ENCODE measurements at regions of chr1 and their contacts with region 1.

Region 1: DNA sequence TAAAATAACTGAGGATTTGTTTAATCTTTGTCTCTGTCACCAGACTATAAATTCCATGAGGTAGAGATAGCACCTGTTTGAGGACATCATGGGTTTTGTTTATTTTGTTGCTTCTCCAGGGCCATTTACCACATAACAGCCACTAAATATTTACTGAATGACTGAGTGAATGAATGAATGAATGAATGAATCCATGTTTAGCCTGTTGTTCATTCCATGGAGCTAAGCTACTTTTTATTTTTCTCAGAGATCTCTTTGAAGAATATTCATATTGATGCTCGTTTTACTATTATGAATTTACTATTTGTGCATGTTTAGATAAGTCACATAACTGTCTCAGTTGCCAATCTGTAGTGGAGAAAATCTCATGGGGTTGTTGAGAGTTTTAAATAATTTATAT is 17.7 kb downstream of the LRRC8B start:
- DNase-seq: no peak
- ATAC-seq: no peak
- H3K4me3 ChIP-seq: no peak overlapping the region
- H3K4me3 Mint-ChIP-seq: no peak overlapping the region
- H3K27ac ChIP-seq: no peak overlapping the region
- H3K27ac Mint-ChIP-seq: no peak overlapping the region
- H3K4me1 ChIP-seq: no peaks in the 10 kb centered on the region
- H3K4me1 Mint-ChIP-seq: peaks cover 17% of the 10 kb centered on the region
- H3K27me3 ChIP-seq: no peaks in the 10 kb centered on the region
- H3K27me3 Mint-ChIP-seq: no peaks in the 10 kb centered on the region
- CTCF ChIP-seq: no peak

Region 2: GRCh38 chr1:89221341-89221740 is 321.0 kb before region 1 on chr1:
- CTCF ChIA-PET with region 1: no interaction called
- POLR2A ChIA-PET with region 1: no interaction called
- intact Hi-C with region 1: no loop called
- DNase-seq: no peak
- ATAC-seq: no peak
- H3K4me3 ChIP-seq: no peak overlapping the region
- H3K4me3 Mint-ChIP-seq: no peak overlapping the region
- H3K27ac ChIP-seq: no peak overlapping the region
- H3K27ac Mint-ChIP-seq: no peak overlapping the region
- H3K4me1 ChIP-seq: no peaks in the 10 kb centered on the region
- H3K4me1 Mint-ChIP-seq: no peaks in the 10 kb centered on the region
- H3K27me3 ChIP-seq: no peaks in the 10 kb centered on the region
- H3K27me3 Mint-ChIP-seq: no peaks in the 10 kb centered on the region
- CTCF ChIP-seq: no peak

Region 3: GRCh38 chr1:89584211-89584610 is 41.9 kb after region 1 on chr1:
- CTCF ChIA-PET with region 1: no interaction called
- POLR2A ChIA-PET with region 1: no interaction called
- intact Hi-C with region 1: loop called (anchors 2 kb)
- DNase-seq: no peak
- ATAC-seq: no peak
- H3K4me3 ChIP-seq: no peak overlapping the region
- H3K4me3 Mint-ChIP-seq: no peak overlapping the region
- H3K27ac ChIP-seq: no peak overlapping the region
- H3K27ac Mint-ChIP-seq: no peak overlapping the region
- H3K4me1 ChIP-seq: peaks cover 2% of the 10 kb centered on the region in 2 donors
- H3K4me1 Mint-ChIP-seq: peaks cover 2% of the 10 kb centered on the region
- H3K27me3 ChIP-seq: no peaks in the 10 kb centered on the region
- H3K27me3 Mint-ChIP-seq: no peaks in the 10 kb centered on the region
- CTCF ChIP-seq: no peak

Measured in B cell (primary cell).